ENCODE measurements at regions of chr1 and their contacts with region 1.

Region 1: DNA sequence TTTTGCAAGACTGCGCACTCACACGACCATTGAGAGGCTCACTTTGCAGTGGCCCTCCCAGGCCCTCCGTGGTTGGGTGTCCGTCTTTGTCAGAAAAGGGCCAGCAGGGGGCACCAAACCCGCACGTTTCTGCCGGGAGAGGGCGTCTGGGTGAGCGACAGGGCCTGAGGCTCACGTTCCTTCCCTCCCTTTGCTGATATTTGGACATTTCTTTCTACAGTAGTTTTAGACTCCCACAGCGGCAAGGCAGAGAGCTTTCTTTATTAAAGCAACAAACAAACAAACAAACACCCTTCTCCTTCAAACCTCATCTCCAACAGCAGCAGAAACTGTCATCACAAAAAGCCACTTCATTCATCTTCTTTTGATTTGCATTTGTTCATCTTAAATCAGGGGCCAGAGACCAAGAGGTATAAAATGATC is 79.2 kb upstream of the WDR26 start:
- DNase-seq: peak; percentile 91
- ATAC-seq: peak; percentile 97
- H3K4me3 Mint-ChIP-seq: no peak overlapping the region
- H3K27ac Mint-ChIP-seq: peak overlapping the region; percentile 37
- H3K4me1 Mint-ChIP-seq: peaks cover 26% of the 10 kb centered on the region
- H3K27me3 Mint-ChIP-seq: no peaks in the 10 kb centered on the region

Region 2: DNA sequence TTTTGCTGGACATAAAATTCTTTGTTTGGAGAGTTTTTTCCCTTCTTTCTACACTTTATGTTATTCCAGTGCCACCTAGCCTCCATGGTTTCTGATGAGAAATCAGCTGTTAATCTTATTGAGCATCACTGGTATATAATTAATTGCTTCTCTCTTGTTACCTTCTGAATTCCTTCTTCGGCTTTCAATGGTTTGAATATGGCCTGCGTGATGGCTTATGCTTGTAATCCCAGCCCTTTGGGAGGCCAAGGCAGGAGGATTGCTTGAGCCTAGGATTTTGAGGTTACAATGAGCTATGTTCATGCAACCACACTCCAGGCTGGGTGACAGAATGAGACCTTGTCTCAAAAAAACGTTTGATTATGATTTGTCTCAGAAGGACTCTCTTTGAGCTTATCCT is 170.1 kb before region 1 on chr1:
- CTCF ChIA-PET with region 1: no interaction called
- DNase-seq: no peak
- ATAC-seq: no peak
- H3K4me3 Mint-ChIP-seq: no peak overlapping the region
- H3K27ac Mint-ChIP-seq: no peak overlapping the region
- H3K4me1 Mint-ChIP-seq: peaks cover 7% of the 10 kb centered on the region
- H3K27me3 Mint-ChIP-seq: peaks cover 4% of the 10 kb centered on the region

Region 3: GRCh38 chr1:224407571-224408560 is 105.9 kb before region 1 on chr1:
- CTCF ChIA-PET with region 1: no interaction called
- DNase-seq: no peak
- ATAC-seq: no peak
- H3K4me3 Mint-ChIP-seq: no peak overlapping the region
- H3K27ac Mint-ChIP-seq: no peak overlapping the region
- H3K4me1 Mint-ChIP-seq: peaks cover 18% of the 10 kb centered on the region
- H3K27me3 Mint-ChIP-seq: no peaks in the 10 kb centered on the region

Region 4: DNA sequence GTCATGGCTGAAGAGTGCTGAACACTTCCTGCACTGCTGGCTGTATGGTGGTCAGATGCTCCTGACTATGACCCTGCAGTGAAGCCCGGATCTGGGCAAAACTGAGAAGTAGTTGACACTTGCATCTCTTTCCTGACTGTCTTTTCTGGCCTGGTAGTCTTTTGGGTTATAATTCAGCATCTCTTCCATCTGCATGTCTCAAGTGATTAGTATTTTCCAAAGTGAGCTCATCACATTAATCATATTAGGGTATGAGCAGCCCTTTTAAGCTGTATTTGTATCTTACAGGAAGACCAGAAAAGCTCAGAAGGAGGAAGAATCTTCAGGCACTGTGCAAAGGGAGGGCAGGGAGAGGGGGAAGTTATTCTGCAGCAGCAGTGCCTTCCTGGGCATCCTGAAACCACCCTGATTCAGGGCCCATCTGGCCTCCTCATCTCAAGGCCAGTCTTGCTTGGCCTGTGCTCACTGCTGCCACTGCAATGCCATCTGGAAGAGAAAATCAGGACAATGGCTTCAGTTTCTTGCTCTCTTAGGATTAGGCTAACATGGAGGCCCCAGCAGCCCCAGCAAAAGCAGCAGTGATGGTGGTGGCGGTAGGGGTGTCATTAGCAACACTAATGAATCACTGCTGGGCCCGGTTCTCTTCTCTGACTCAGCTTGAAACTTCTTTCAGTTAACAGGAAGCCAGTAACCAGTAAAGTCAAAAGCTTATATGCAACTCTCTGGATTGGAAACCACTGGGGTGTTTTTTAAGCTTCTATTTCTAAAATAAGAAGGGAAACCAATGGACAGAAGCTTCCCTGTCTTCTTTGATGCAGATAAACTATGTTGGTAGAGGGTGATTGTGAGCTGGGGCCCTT is 15.9 kb before region 1 on chr1:
- CTCF ChIA-PET with region 1: interaction called, 28 read pairs
- DNase-seq: peak; percentile 92
- ATAC-seq: peak; percentile 97
- H3K4me3 Mint-ChIP-seq: peak overlapping the region; percentile 52
- H3K27ac Mint-ChIP-seq: peak overlapping the region; percentile 100
- H3K4me1 Mint-ChIP-seq: peaks cover 60% of the 10 kb centered on the region
- H3K27me3 Mint-ChIP-seq: no peaks in the 10 kb centered on the region

Region 5: DNA sequence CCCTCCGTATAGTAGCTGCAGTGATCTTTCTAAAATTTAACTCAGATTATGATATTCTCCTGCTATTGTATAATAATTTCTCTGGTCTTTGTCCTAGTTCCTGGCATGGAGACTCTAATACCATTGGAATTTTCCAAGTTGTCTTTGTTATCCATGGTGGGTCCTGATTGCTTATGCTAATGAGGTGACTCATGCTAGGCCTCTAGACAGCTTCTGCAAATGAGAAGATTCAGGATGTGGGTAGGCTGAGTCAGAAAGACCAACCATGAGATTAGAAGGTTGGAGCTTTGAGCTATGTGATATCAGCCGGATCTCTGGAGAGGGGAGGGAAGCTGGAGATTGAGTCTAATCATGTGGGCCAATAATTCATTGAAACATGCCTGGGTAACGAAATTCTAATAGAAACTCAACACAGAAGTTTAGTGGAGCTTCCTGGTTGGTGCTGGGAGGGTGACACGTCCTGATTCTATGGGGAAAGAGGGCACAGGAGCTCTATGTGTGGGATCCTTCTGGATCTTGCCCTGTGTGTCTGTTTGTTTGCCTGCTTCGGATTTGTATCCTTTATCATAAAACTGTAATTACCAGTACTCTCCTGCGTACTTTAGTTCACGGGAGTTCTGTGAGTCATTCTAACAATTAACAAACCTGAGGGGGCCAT is 29.1 kb after region 1 on chr1:
- CTCF ChIA-PET with region 1: interaction called, 32 read pairs
- DNase-seq: peak; percentile 75
- ATAC-seq: peak; percentile 99
- H3K4me3 Mint-ChIP-seq: no peak overlapping the region
- H3K27ac Mint-ChIP-seq: peak overlapping the region; percentile 13
- H3K4me1 Mint-ChIP-seq: peaks cover 20% of the 10 kb centered on the region
- H3K27me3 Mint-ChIP-seq: peaks cover 26% of the 10 kb centered on the region

Region 6: GRCh38 chr1:224623743-224624333 is 110.0 kb after region 1 on chr1:
- CTCF ChIA-PET with region 1: interaction called, 19 read pairs
- DNase-seq: peak; percentile 96
- ATAC-seq: peak; percentile 88
- H3K4me3 Mint-ChIP-seq: peak overlapping the region; percentile 57
- H3K27ac Mint-ChIP-seq: peak overlapping the region; percentile 96
- H3K4me1 Mint-ChIP-seq: peaks cover 50% of the 10 kb centered on the region
- H3K27me3 Mint-ChIP-seq: peaks cover 15% of the 10 kb centered on the region

Region 7: GRCh38 chr1:224851210-224851847 is 337.5 kb after region 1 on chr1:
- CTCF ChIA-PET with region 1: interaction called, 109 read pairs
- DNase-seq: peak; percentile 66
- ATAC-seq: peak; percentile 57
- H3K4me3 Mint-ChIP-seq: no peak overlapping the region
- H3K27ac Mint-ChIP-seq: no peak overlapping the region
- H3K4me1 Mint-ChIP-seq: no peaks in the 10 kb centered on the region
- H3K27me3 Mint-ChIP-seq: peaks cover 10% of the 10 kb centered on the region

Measured in activated CD8-positive, alpha-beta memory T cell treated with anti-CD3 and anti-CD28 coated beads, Interleukin-2, amount 10 ng/mL, durations not matched to agents 7 days and 5 days (primary cell).